ENCODE measurements at regions of chr12 and their contacts with region 1.

Region 1: DNA sequence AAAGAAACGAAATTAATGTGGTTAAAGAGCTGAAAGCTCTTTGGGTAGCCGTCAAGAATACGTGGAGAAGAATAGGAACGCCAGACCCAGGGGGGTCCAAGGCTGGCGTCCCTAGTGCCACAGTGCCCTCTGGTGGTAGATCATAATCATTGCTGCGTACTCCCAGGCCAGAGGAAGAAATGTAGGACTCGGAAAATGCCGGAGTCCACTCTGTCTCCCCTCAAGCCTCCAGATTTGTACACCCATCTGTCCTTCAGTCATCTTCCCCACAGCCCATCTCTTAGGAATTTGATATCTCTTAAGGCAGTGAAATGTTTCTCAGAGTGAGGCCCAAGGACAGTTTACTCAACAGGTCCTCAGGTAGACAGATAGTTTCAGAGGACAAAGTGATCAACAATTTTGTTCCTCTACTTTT is 25.4 kb upstream of the PLEKHG6 start:
- H3K4me3 Mint-ChIP-seq: no peak overlapping the region
- H3K27ac Mint-ChIP-seq: no peak overlapping the region
- H3K4me1 Mint-ChIP-seq: peaks cover 14% of the 10 kb centered on the region
- H3K27me3 Mint-ChIP-seq: peaks cover 38% of the 10 kb centered on the region

Region 2: GRCh38 chr12:5988659-5989116 is 296.4 kb before region 1 on chr12:
- intact Hi-C with region 1: loop called (anchors 1 kb)
- H3K4me3 Mint-ChIP-seq: no peak overlapping the region
- H3K27ac Mint-ChIP-seq: no peak overlapping the region
- H3K4me1 Mint-ChIP-seq: peaks cover 5% of the 10 kb centered on the region
- H3K27me3 Mint-ChIP-seq: peaks cover 3% of the 10 kb centered on the region